ENCODE measurements at regions of chr11 and their contacts with region 1.

Region 1: GRCh38 chr11:87597725-87598124 is 560.0 kb downstream of the TMEM135 start:
- DNase-seq: no peak
- H3K4me3 ChIP-seq: no peak overlapping the region
- H3K27ac ChIP-seq: no peak overlapping the region
- H3K4me1 ChIP-seq: no peaks in the 10 kb centered on the region
- H3K27me3 ChIP-seq: no peaks in the 10 kb centered on the region
- CTCF ChIP-seq: no peak
- EP300 ChIP-seq: no peak
- POLR2A ChIP-seq: no peak

Region 2: GRCh38 chr11:87639753-87640364 is 42.1 kb after region 1 on chr11:
- intact Hi-C with region 1: loop called (anchors 10 kb)
- DNase-seq: no peak
- H3K4me3 ChIP-seq: no peak overlapping the region
- H3K27ac ChIP-seq: no peak overlapping the region
- H3K4me1 ChIP-seq: no peaks in the 10 kb centered on the region
- H3K27me3 ChIP-seq: no peaks in the 10 kb centered on the region
- CTCF ChIP-seq: no peak
- EP300 ChIP-seq: no peak
- POLR2A ChIP-seq: no peak